ENCODE measurements at regions of chr2 and their contacts with region 1.

Region 1: DNA sequence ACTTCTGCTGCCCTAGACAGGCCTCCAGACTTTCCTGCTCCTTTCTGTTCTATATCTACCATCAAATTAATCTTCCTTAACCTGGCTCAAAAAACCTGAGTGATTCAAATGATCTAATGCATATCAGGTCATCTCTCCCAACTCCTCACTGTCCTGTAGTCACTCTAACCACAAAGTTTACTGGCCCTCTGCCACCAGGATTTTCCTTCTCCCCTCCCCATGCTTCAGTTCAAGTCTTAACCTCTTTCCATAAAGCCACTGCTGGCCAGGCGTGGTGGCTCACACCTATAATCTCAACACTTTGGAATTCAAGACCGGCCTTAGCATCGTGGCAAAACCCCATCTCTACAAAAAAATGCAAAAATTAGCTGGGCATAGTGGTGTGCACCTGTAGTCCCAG is 7.4 kb upstream of the SP3 start:
- DNase-seq: peak; percentile 95
- ATAC-seq: peak; percentile 95
- H3K4me3 ChIP-seq: no peak overlapping the region
- H3K27ac ChIP-seq: peak overlapping the region; percentile 76
- H3K4me1 ChIP-seq: peaks cover 33% of the 10 kb centered on the region
- H3K27me3 ChIP-seq: no peaks in the 10 kb centered on the region
- CTCF ChIP-seq: no peak

Region 2: DNA sequence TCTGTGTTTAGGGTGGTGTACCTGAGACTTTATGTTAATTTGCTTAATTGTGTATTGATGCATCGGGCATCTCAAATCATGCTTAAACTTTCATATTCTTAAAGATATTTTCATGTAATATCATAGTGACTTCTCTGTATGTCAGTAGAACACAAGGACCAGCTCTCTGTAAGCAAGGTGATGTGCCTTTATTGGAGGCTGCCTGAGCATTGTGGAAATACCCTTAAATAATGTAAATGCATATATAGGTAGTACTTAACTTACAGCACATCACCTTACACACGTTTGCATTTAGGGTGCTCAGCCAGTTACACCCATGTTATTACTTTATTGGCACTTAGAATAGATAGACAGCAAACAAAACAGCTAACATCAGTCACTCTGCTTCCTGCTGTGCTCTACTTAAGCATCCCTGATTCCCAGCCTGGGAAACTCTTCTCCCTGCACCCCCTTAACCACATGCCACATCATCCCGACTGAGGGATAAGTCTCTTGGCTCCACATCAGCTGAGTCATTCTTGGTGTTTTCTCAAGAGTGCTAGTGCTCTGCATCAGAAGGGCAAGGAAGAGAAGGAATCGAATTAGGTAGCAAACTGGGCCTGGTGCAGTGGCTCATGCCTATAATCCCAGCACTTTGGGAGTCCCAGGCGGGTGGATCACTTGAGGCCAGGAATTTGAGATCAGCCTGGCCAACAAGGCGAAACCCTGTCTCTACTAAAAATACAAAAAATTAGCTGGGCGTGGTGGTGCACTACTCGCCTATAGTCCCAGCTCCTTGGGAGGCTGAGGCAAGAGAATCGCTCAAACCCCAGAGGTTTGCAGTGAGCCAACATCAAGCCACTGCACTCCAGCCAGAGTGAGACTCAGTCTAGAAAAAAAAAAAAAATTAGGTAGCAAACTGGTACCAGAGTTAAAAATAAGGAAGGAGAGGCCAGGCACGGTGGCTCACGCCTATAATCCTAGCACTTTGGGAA is 788.3 kb before region 1 on chr2:
- CTCF ChIA-PET with region 1: no interaction called
- POLR2A ChIA-PET with region 1: no interaction called
- intact Hi-C with region 1: no loop called
- DNase-seq: peak; percentile 98
- ATAC-seq: peak; percentile 99
- H3K4me3 ChIP-seq: no peak overlapping the region
- H3K27ac ChIP-seq: peak overlapping the region; percentile 74
- H3K4me1 ChIP-seq: peaks cover 27% of the 10 kb centered on the region
- H3K27me3 ChIP-seq: no peaks in the 10 kb centered on the region
- CTCF ChIP-seq: no peak

Region 3: DNA sequence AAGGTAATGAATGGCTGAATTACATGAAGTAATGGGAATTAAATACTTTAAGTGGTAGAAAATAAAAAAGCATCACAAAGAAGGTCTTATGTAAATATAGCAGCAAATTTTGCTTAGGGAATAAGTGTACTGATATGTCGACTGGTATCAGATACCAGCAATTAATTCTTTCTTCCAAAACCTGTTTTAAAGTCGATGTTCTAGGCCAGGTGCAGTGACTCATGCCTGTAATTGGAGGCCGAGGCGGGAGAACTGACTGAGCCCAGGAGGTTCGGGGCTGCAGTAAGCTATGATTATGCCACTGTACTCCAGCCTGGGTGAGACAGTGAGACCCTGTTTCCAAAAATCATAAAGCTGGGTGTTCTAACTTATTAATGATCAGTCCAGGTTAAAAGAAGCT is 37.7 kb before region 1 on chr2:
- CTCF ChIA-PET with region 1: no interaction called
- POLR2A ChIA-PET with region 1: no interaction called
- intact Hi-C with region 1: no loop called
- DNase-seq: peak; percentile 70
- ATAC-seq: peak; percentile 53
- H3K4me3 ChIP-seq: no peak overlapping the region
- H3K27ac ChIP-seq: no peak overlapping the region
- H3K4me1 ChIP-seq: peaks cover 34% of the 10 kb centered on the region
- H3K27me3 ChIP-seq: no peaks in the 10 kb centered on the region
- CTCF ChIP-seq: no peak

Region 4: DNA sequence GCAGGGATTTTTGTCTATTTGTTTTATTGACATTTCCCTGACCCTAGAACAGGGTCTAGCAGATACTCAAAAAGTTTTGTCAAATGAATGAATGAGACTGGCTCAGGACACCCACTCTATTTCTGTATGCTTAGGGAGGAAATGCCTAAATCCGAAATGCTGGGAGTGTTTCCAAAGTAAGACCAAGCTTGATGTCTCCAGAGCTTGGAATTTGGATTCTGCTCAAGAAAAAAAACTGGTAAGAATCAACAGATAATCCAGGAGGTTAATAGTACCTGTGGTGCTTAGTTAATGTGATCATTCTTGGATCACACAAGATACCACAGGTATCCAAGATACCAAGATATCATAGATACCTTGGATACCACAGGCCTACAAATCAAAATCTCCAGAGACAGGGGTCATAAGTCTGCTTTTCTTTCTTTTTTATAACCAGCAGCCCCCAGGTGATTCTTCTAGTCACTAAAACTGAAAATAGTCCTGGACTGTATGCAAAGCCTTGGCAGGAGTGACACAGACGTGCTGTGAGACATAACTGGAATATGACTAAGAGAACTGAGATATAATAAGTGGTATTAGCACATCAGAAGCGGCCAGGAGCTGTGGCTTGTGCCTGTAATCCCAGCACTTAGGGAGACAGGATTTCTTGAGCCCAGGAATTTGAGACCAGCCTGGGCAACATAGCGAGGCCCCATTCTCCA is 32.5 kb after region 1 on chr2:
- CTCF ChIA-PET with region 1: no interaction called
- POLR2A ChIA-PET with region 1: no interaction called
- intact Hi-C with region 1: loop called (anchors 5 kb)
- DNase-seq: peak; percentile 59
- ATAC-seq: peak; percentile 63
- H3K4me3 ChIP-seq: no peak overlapping the region
- H3K27ac ChIP-seq: no peak overlapping the region
- H3K4me1 ChIP-seq: 0 out of 2 replicates have a peak, but pooled peaks cover 5% of the 10 kb centered on the region
- H3K27me3 ChIP-seq: no peaks in the 10 kb centered on the region
- CTCF ChIP-seq: no peak